ENCODE measurements at regions of chr1 and their contacts with region 1.

Region 1: GRCh38 chr1:34763142-34763781 is 3.7 kb downstream of the GJB4 start:
- DNase-seq: no peak
- ATAC-seq: no peak
- H3K4me3 ChIP-seq: no peak overlapping the region
- H3K4me3 Mint-ChIP-seq: no peak overlapping the region
- H3K27ac ChIP-seq: no peak overlapping the region
- H3K27ac Mint-ChIP-seq: no peak overlapping the region
- H3K4me1 ChIP-seq: no peaks in the 10 kb centered on the region
- H3K4me1 Mint-ChIP-seq: no peaks in the 10 kb centered on the region
- H3K27me3 ChIP-seq: peaks cover 0 to 6% (median 2%) of the 10 kb centered on the region in 4 experiments
- H3K27me3 Mint-ChIP-seq: peaks cover 13% of the 10 kb centered on the region
- CTCF ChIP-seq: no peak

Region 2: DNA sequence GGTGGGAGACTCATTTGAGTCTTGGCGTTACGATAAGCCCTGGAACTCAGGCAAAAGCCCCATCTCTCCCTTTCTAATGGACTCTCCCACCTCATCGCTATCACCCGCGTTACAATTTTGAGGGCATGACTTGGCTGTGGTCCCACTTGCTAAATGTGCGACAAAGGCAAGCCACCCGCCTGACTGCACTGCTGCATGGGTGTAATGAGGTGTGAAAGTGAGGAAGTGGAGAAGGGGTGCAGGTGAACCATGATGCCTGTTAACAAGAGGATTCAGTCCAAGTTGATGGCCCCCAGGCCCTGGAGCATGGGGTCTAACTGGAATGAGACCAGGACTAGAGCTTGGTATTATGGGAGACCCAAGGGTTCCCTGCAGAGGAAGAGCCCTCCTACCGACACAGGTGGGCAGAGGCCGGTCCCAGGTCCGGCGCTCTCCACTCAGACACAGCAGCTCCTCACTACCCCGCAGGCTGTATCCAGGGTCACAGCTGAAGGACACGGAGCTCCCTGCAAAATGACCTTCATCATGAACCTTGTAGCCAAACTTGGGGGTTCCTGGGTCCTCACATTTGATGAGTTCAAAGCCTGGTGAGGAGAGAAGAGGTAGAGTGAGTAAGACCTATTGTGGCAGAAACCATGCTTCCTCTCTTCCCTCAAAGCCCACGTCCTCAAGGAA is 1064.8 kb before region 1 on chr1:
- CTCF ChIA-PET with region 1: no interaction called
- POLR2A ChIA-PET with region 1: no interaction called
- intact Hi-C with region 1: no loop called
- DNase-seq: no peak
- ATAC-seq: no peak
- H3K4me3 ChIP-seq: no peak overlapping the region
- H3K4me3 Mint-ChIP-seq: no peak overlapping the region
- H3K27ac ChIP-seq: no peak overlapping the region
- H3K27ac Mint-ChIP-seq: no peak overlapping the region
- H3K4me1 ChIP-seq: no peaks in the 10 kb centered on the region
- H3K4me1 Mint-ChIP-seq: no peaks in the 10 kb centered on the region
- H3K27me3 ChIP-seq: peaks cover 0 to 2% (median 0%) of the 10 kb centered on the region in 4 experiments
- H3K27me3 Mint-ChIP-seq: peaks cover 25% of the 10 kb centered on the region
- CTCF ChIP-seq: no peak

Region 3: GRCh38 chr1:34709547-34709946 is 53.7 kb before region 1 on chr1:
- CTCF ChIA-PET with region 1: no interaction called
- POLR2A ChIA-PET with region 1: no interaction called
- intact Hi-C with region 1: no loop called
- DNase-seq: no peak
- ATAC-seq: no peak
- H3K4me3 ChIP-seq: no peak overlapping the region
- H3K4me3 Mint-ChIP-seq: no peak overlapping the region
- H3K27ac ChIP-seq: no peak overlapping the region
- H3K27ac Mint-ChIP-seq: no peak overlapping the region
- H3K4me1 ChIP-seq: no peaks in the 10 kb centered on the region
- H3K4me1 Mint-ChIP-seq: no peaks in the 10 kb centered on the region
- H3K27me3 ChIP-seq: no peaks in the 10 kb centered on the region
- H3K27me3 Mint-ChIP-seq: peaks cover 5% of the 10 kb centered on the region
- CTCF ChIP-seq: no peak

Region 4: DNA sequence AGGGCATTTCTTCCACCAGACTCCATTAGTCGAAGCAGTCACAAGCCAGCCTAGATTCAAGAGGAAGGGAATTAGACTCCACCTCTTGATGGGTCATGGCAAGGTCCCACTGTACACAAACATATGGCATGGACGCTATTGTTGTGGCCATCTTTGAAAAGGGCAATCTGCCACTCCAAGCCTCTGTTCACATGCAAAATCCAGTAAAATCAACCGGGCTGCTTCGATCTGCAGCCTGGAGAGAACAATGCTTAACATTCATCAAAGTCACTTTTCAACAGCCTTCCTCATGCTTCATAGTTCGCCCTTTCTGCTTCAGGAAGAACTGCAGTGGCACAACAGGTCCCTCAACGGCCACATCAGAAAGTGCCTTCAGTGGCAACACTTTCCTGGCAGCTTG is 36.4 kb before region 1 on chr1:
- CTCF ChIA-PET with region 1: no interaction called
- POLR2A ChIA-PET with region 1: no interaction called
- intact Hi-C with region 1: loop called (anchors 1 kb)
- DNase-seq: no peak
- ATAC-seq: no peak
- H3K4me3 ChIP-seq: no peak overlapping the region
- H3K4me3 Mint-ChIP-seq: no peak overlapping the region
- H3K27ac ChIP-seq: no peak overlapping the region
- H3K27ac Mint-ChIP-seq: no peak overlapping the region
- H3K4me1 ChIP-seq: no peaks in the 10 kb centered on the region
- H3K4me1 Mint-ChIP-seq: no peaks in the 10 kb centered on the region
- H3K27me3 ChIP-seq: peaks cover 0 to 10% (median 2%) of the 10 kb centered on the region in 4 experiments
- H3K27me3 Mint-ChIP-seq: peaks cover 32% of the 10 kb centered on the region
- CTCF ChIP-seq: no peak